ENCODE measurements at regions of chr12 and their contacts with region 1.

Region 1: GRCh38 chr12:121753844-121754264 is 39.6 kb downstream of the RHOF start:
- DNase-seq: peak; percentile 81

Region 2: DNA sequence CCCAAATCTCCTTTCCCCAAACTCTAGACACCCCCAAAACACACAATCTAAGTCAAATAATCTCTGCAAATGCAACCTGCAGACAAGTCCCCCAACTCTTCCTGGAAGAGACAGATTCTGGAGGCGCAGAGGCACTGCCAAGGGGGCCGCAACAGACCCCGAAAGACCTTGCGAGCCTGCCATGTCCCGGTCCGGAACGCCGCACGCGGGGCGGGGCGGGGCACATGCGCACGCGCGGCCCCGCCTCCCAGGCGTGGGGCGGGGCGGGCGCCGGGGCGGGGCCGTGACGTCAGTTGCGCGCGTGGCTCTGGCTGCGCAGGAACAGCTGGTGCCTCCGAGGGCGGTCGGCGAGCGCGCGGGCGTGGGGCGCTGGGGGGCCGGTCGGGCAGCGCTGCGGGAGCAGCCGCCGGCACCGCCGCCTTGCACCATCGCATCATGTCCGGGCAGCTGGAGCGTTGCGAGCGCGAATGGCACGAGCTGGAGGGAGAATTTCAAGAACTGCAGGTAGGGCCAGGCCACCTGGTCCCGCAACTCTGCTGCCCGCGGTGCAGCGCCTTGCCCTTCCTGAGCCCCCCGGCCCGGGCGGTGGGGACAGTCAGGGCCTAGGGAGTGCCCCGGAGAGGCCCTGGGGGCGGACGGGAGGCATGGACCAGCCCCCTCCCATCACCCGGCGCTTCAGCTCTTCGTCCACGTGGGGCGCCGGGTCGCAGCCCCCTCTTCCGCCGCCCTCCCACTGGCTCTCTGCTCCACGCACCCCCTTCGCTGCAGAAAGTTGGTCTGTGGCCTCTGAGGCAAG is 41.2 kb before region 1 on chr12 and contains the start of gene TMEM120B:
- intact Hi-C with region 1: loop called (anchors 5 kb)
- DNase-seq: peak; percentile 96
- total RNA-seq, gene TMEM120B: 6.2 TPM

Region 3: DNA sequence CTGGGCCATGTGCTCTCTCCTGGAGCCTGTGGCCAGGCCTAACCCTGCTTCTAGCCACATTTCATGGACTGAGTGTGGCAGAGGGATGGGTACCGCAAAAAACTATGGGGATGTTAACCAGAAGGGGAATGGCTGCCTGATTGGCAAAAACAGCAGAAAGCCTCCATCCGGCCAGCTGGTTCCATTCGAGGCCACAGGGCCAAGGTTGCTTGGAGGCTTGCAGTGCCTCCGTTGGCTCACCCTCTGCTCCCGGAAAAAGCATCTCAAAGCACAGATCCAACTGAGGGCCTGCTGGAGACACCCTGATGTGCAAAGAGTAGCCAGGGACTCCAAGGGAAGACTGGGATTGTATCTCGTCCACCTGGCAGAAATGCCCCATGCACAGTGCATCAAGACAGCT is 24.8 kb before region 1 on chr12:
- intact Hi-C with region 1: no loop called
- DNase-seq: no peak

Region 4: GRCh38 chr12:122203301-122204166 is 449.7 kb after region 1 on chr12 and contains the start of gene B3GNT4:
- intact Hi-C with region 1: no loop called
- DNase-seq: peak; percentile 77
- total RNA-seq, gene B3GNT4: not detected

Measured in cardiac septum (tissue), 1 donor.